ENCODE measurements at regions of chr6 and their contacts with region 1.

Region 1: DNA sequence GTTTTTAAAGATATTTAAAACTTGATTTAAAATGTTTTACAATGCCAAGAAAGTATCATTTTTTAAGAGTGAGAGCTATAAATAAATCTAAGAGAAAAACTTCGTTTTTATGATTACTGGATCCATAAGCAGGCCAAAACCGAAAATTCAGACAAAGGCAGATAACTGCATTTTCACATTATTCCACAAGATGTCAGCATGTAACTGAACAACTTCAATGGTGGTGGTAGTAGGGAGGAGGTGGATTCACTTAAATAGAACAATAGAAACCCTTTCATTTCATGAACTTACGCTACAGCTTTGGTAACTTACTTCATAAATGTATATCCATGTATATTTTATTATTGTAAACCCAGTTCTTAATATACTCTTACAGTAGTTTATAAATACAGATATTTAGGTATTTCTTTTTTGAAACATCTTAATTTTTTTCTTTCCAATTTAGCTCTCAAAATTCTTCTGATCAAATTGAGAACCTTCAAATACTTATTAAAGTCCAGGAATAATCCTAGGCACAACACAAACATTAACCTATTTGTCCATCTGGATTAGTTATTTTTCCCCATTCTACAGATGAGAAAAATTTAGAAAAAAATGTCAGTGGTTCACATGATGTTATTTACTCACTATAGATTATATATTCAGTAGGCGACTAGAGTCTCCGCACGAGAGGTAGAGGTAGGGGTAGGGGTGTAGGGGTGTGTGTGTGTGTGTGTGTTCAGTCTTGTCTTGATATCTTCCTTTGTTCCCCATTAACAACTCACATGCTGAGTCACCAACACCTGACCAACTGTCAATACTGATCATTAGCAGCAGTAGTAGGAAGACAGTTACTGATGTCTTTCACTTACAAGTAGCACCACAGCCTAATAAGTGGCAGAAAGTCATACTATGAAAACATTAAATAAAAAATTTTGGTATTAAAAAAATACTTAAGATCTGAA is 111.5 kb downstream of the ARHGAP18 start:
- DNase-seq: peak; percentile 21
- H3K4me3 Mint-ChIP-seq: no peak overlapping the region
- H3K27ac Mint-ChIP-seq: peak overlapping the region; percentile 16
- H3K4me1 Mint-ChIP-seq: no peaks in the 10 kb centered on the region
- H3K27me3 Mint-ChIP-seq: no peaks in the 10 kb centered on the region
- CTCF ChIP-seq: peak; percentile 50

Region 2: DNA sequence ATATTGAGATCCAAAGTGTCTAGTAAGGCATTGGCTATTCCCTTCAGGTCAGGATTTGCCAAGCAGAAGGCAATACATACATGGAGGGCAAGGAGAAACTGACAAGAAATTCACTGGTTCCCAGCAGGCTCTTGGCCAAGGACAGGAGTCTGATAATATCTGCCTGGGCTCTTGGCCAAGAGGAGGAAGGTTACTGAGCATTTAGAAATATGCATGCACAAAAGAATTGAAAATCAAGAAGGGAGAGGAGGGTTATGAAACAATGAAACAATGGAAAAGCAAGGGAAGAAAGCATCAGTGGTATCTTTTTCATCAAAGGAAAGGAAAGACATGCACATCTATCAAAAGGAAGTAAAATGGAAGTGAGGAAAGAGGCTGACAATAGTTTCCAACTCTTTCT is 69.1 kb after region 1 on chr6:
- CTCF ChIA-PET with region 1: no interaction called
- intact Hi-C with region 1: loop called (anchors 1 kb)
- DNase-seq: no peak
- H3K4me3 Mint-ChIP-seq: peak overlapping the region; percentile 5
- H3K27ac Mint-ChIP-seq: peak overlapping the region; percentile 11
- H3K4me1 Mint-ChIP-seq: peaks cover 62% of the 10 kb centered on the region
- H3K27me3 Mint-ChIP-seq: no peaks in the 10 kb centered on the region
- CTCF ChIP-seq: no peak

Measured in Calu3 (cell line).